Ascending aorta (tissue), 2 donors: ENCODE measurements at regions of chr5 and their contacts with region 1.

Region 1: DNA sequence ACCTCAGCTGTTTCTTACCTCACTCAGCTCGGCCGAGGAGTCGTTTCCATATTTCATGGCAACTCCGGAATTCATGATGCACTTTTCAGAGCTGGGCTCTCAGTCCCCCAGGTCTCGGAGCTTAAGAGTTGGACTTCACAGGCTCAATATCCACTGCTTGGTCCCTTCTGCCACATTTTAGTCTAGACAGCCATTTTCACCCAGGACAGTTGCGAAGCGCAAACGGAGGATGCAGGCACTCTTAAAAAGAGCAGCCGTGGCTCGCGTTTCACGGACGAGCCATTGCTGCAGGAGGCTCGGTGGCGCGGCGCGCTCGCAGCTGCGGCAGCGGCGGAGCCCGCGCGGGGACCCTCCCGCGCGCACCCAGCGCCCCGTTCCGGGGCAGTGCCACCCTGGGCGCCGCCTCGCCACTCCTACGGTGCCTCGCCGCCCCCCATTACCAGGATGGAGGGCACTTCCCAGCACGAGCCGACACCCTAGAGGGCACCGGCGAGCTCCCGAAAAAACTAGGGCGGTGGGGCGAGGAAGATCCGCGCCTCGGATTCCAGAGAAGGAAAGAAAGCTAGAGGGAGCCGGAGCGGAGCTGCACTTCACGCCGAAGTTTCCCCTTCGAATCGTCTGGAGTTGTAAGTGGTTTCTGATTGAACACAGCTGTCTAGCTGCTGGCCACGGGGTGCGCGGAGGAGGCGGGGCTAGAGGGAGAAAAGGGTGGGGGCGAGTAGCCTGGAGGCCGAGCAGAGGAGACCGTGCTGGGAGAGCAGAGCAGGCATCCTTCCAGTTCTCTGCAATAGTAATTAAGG is 140.3 kb downstream of the TSSK1B start:
- DNase-seq: peak; percentile 66 to 90
- H3K4me3 ChIP-seq: peak overlapping the region; percentile 80 to 87
- H3K27ac ChIP-seq: peak overlapping the region; percentile 74 to 94
- H3K4me1 ChIP-seq: peaks cover 0 to 6% of the 10 kb centered on the region in 2 donors
- H3K27me3 ChIP-seq: no peaks in the 10 kb centered on the region
- CTCF ChIP-seq: peak in 1 of 3 experiments; percentile 6

Region 2: DNA sequence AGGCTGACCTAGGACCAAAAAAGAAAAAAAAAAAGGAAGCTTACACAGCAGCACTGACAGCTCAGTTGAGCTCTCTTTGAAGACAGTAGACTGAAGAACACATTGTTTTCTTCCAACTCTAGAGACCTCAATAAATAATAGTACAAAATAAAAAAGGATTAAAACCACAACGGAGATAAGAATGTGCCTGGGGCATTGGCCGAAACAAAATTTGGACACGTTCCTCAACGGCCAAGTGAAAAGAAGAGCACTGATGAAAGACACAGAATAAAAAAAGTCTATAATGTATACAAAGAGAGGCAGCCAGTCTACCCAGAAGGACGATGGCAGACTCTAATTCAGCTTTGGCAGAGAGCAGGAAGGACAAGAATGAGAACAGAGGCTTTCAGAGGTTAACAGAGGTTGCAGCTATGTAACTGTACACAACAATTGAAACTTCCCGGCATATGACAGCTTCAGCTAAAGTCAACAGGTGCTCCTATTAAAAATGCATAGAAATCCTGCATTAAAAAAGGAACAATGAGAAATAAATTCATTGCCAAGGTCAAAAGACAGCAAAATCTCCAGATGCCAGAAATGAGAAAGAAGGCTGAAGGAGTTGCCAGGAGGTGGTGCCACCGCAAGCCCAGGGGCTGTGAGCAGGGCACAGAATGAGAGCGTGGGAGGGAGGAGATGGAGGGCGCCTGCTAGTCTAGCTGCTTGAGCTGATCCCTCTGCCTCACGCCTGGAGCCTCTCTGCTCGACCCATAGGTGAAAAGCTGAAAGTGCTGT is 204.0 kb before region 1 on chr5:
- intact Hi-C with region 1: loop called (anchors 5 kb)
- DNase-seq: no peak
- H3K4me3 ChIP-seq: peak overlapping the region in 1 of 2 donors; percentile 44
- H3K27ac ChIP-seq: peak overlapping the region; percentile 38 to 41
- H3K4me1 ChIP-seq: peaks cover 0 to 26% of the 10 kb centered on the region in 2 donors
- H3K27me3 ChIP-seq: no peaks in the 10 kb centered on the region
- CTCF ChIP-seq: peak in 1 of 3 experiments; percentile 29

Region 3: GRCh38 chr5:113487781-113488644 is 193.5 kb after region 1 on chr5 and contains the start of gene MCC:
- intact Hi-C with region 1: loop called (anchors 10 kb)
- DNase-seq: peak in 1 of 2 donors; percentile 81
- H3K4me3 ChIP-seq: peak within 1 kb of the TSS; percentile 55 to 69
- H3K27ac ChIP-seq: peak within 1 kb of the TSS in 1 of 2 donors; percentile 31
- H3K4me1 ChIP-seq: peaks cover 3 to 8% of the 10 kb centered on the region in 2 donors
- H3K27me3 ChIP-seq: no peaks in the 10 kb centered on the region
- CTCF ChIP-seq: no peak
- total RNA-seq, gene MCC: 67.9 TPM